Activated B cell treated with CpG ODN at 0.5 μM for 24 hours (primary cell): ENCODE measurements at regions of chr6 and their contacts with region 1.

Region 1: DNA sequence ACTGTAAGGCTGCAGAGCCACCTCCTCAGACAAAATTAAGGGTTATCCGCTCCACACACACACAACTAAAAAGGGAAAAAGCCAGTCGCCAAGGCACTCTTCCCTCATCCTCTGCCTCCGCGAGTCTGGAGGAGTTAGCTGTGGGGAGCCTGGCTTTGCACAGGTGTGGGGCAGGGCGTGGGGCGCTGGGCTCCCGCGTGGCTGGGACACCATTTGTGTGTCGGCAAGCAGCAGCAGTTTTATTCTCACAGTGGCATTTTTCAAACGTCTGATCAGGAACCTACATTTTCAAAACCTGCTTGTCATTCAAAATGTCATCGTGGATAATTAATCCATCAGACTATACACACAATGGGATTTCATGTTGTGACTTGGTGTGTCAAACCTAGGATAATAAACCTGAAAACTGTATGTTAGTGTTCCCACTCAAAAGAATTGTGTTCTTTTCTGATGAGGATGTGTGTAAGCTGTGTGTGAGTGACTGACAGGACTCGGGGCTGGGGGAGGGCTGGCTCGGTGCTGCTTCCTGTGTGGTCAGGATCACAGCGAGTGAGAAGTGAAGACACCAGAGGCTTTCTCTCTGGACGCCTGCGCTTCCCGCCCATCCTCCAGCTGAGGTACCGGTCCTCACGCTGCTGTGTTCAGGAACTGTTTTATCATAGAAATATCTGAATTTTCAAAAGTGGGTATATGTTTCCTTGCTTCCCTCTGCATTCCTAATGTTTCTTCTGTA is 83.1 kb downstream of the IRF4 start:
- DNase-seq: peak; percentile 40
- ATAC-seq: peak; percentile 66
- H3K4me3 Mint-ChIP-seq: peak overlapping the region; percentile 48
- H3K27ac Mint-ChIP-seq: peak overlapping the region; percentile 39
- H3K4me1 Mint-ChIP-seq: peaks cover 60% of the 10 kb centered on the region
- H3K27me3 Mint-ChIP-seq: peaks cover 2% of the 10 kb centered on the region
- CTCF ChIP-seq: no peak

Region 2: DNA sequence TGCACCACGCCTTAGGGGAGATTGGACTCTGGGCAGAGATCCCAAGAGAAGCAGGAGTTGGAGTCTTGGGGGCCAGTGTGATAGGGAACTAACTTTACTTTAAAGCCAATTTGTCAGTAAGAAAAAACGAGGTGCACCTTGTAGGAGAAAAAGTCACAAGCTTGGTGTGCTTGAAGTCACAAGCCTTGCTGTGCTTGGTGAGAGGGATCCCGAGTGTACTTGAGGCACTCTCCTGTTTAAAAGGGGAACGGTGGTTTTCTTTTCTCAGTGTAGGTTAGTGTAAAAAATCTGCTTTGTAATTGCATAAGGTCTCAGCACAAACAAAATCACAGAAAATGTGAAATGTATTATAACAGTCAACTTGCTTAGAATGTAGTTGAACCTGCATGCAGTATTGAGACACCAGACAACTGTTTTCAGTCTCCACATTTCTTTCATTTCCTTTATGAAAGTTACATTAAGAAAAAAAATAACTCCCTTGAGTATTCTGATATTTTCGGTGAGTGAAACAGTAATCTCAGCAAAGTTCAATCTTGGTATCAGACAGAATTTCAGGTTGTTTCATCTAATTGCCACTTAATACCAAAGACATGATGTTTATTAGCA is 293.5 kb before region 1 on chr6:
- CTCF ChIA-PET with region 1: no interaction called
- POLR2A ChIA-PET with region 1: no interaction called
- intact Hi-C with region 1: loop called (anchors 5 kb)
- DNase-seq: no peak
- ATAC-seq: peak; percentile 54
- H3K4me3 Mint-ChIP-seq: peak overlapping the region; percentile 60
- H3K27ac Mint-ChIP-seq: peak overlapping the region; percentile 74
- H3K4me1 Mint-ChIP-seq: peaks cover 66% of the 10 kb centered on the region
- H3K27me3 Mint-ChIP-seq: no peaks in the 10 kb centered on the region
- CTCF ChIP-seq: no peak

Region 3: DNA sequence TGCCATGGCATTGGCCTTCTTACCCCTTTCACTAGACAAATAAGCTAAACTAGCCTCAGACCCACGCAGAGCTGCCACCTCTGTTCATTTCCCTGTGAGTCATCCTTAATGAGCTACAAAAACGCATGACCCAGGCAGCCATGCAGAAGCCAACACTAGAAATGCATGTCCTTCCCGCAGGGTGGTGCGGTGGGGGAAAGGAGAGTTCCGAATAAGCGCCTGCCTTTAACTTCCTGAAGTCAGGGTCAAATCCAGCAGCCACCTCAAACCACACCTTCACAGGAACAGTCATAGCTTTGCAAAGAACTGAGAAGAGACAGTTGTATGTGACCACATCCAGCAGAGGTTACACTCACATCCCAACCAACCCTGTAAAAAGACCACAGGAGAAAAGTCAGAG is 42.6 kb before region 1 on chr6:
- CTCF ChIA-PET with region 1: no interaction called
- POLR2A ChIA-PET with region 1: interaction called, 5 read pairs
- intact Hi-C with region 1: loop called (anchors 5 kb)
- DNase-seq: no peak
- ATAC-seq: no peak
- H3K4me3 Mint-ChIP-seq: no peak overlapping the region
- H3K27ac Mint-ChIP-seq: peak overlapping the region; percentile 35
- H3K4me1 Mint-ChIP-seq: peaks cover 35% of the 10 kb centered on the region
- H3K27me3 Mint-ChIP-seq: no peaks in the 10 kb centered on the region
- CTCF ChIP-seq: no peak

Region 4: GRCh38 chr6:455006-455585 is 19.5 kb before region 1 on chr6:
- CTCF ChIA-PET with region 1: no interaction called
- POLR2A ChIA-PET with region 1: no interaction called
- intact Hi-C with region 1: no loop called
- DNase-seq: no peak
- ATAC-seq: no peak
- H3K4me3 Mint-ChIP-seq: no peak overlapping the region
- H3K27ac Mint-ChIP-seq: no peak overlapping the region
- H3K4me1 Mint-ChIP-seq: no peaks in the 10 kb centered on the region
- H3K27me3 Mint-ChIP-seq: no peaks in the 10 kb centered on the region
- CTCF ChIP-seq: no peak

Region 5: DNA sequence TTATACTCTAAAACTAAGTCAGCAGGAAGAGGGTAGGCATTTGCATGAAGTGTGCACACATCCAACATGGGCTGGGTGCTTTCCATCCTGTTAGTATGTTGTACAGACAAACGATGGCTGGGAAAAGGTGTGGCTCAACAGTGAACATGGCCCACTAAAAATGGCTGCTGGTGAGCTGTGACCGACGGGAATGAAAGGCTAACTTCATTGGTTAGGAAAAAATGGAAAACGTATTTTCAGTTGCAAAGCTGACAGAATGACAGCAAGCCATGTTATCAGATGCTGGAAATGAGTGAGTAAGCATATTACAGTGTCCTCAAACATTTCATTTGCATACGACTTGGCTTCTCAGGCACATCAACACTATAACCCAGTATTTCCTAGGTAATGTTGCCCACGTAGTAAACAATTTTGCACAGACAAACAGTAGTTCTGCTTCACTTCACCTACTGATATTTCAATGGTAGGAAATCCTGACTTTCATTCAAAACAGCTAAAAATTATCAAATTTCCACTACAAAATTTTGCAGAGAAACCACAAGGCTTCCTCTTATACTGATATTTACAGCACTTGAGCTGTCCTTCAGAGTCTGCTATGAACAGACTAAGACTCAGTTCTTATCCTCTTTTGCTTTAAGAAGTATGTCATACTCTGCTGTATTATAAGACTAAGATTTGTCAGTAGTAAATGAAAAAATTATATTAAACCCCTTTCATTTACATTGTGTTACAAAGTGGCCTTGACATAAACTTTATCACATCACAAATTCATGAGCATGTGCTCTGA is 15.8 kb after region 1 on chr6:
- CTCF ChIA-PET with region 1: interaction called, 3 read pairs
- POLR2A ChIA-PET with region 1: interaction called, 80 read pairs
- intact Hi-C with region 1: loop called (anchors 1 kb)
- DNase-seq: no peak
- ATAC-seq: peak; percentile 35
- H3K4me3 Mint-ChIP-seq: peak overlapping the region; percentile 65
- H3K27ac Mint-ChIP-seq: peak overlapping the region; percentile 92
- H3K4me1 Mint-ChIP-seq: peaks cover 64% of the 10 kb centered on the region
- H3K27me3 Mint-ChIP-seq: no peaks in the 10 kb centered on the region
- CTCF ChIP-seq: no peak

Region 6: DNA sequence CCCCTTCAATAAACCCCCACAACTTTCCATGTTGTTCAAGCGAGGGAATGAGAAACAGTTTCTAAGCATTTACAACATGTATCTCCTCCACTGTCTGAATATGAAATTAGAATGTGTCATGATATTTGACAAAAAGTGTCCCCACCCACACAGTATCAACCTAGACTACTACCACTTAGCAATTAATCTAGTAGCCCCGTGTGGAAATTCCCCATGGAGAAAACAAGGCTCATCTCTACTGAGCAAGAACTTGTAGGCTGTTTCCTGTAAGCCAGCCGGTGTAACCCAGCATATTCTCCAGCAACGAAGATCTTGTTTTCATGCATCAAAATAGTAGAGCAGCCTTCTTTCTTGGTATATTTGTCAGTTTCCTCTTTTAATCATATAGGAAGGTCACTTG is 31.9 kb after region 1 on chr6:
- CTCF ChIA-PET with region 1: no interaction called
- POLR2A ChIA-PET with region 1: interaction called, 5 read pairs
- intact Hi-C with region 1: loop called (anchors 2 kb)
- DNase-seq: no peak
- ATAC-seq: peak; percentile 69
- H3K4me3 Mint-ChIP-seq: peak overlapping the region; percentile 2
- H3K27ac Mint-ChIP-seq: peak overlapping the region; percentile 47
- H3K4me1 Mint-ChIP-seq: peaks cover 53% of the 10 kb centered on the region
- H3K27me3 Mint-ChIP-seq: no peaks in the 10 kb centered on the region
- CTCF ChIP-seq: no peak